ENCODE measurements at regions of chr4 and their contacts with region 1.

Region 1: GRCh38 chr4:121182296-121182695 is 18.2 kb upstream of the TNIP3 start:
- DNase-seq: no peak
- H3K4me3 Mint-ChIP-seq: peak overlapping the region; percentile 74
- H3K27ac Mint-ChIP-seq: peak overlapping the region; percentile 87
- H3K4me1 Mint-ChIP-seq: peaks cover 72% of the 10 kb centered on the region
- H3K27me3 Mint-ChIP-seq: no peaks in the 10 kb centered on the region

Region 2: GRCh38 chr4:121062521-121062920 is 119.8 kb before region 1 on chr4:
- CTCF ChIA-PET with region 1: no interaction called
- POLR2A ChIA-PET with region 1: no interaction called
- intact Hi-C with region 1: no loop called
- DNase-seq: no peak
- H3K4me3 Mint-ChIP-seq: no peak overlapping the region
- H3K27ac Mint-ChIP-seq: no peak overlapping the region
- H3K4me1 Mint-ChIP-seq: no peaks in the 10 kb centered on the region
- H3K27me3 Mint-ChIP-seq: peaks cover 13% of the 10 kb centered on the region

Region 3: GRCh38 chr4:121112530-121112929 is 69.8 kb before region 1 on chr4:
- CTCF ChIA-PET with region 1: no interaction called
- POLR2A ChIA-PET with region 1: no interaction called
- intact Hi-C with region 1: loop called (anchors 1 kb)
- DNase-seq: no peak
- H3K4me3 Mint-ChIP-seq: no peak overlapping the region
- H3K27ac Mint-ChIP-seq: no peak overlapping the region
- H3K4me1 Mint-ChIP-seq: peaks cover 12% of the 10 kb centered on the region
- H3K27me3 Mint-ChIP-seq: no peaks in the 10 kb centered on the region

Region 4: GRCh38 chr4:121156822-121157769 is 25.2 kb before region 1 on chr4:
- CTCF ChIA-PET with region 1: interaction called, 3 read pairs
- POLR2A ChIA-PET with region 1: interaction called, 3 read pairs
- intact Hi-C with region 1: loop called (anchors 1 kb)
- DNase-seq: peak; percentile 21
- H3K4me3 Mint-ChIP-seq: peak overlapping the region; percentile 68
- H3K27ac Mint-ChIP-seq: peak overlapping the region; percentile 20
- H3K4me1 Mint-ChIP-seq: peaks cover 42% of the 10 kb centered on the region
- H3K27me3 Mint-ChIP-seq: peaks cover 12% of the 10 kb centered on the region

Region 5: DNA sequence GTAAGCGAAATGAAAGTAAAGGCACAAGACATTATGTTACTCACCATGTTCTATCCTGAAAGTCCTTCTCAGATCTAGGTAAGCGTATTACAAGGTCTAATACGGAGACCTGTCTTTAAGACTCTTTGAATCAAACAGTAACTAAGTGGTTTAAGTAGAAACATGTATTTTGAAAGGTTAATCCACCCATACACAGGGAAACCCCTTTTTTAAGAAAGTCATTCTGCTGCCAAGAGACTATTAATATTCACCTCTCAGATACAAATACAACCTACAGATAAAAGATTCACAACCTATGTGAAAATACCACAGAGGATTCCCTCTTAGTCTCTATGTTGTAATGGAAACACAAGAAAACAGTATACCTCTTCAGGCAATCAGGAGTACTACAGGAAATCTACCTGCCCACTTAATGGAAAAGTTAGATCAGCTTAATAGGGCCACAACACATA is 45.1 kb after region 1 on chr4:
- CTCF ChIA-PET with region 1: no interaction called
- POLR2A ChIA-PET with region 1: no interaction called
- intact Hi-C with region 1: loop called (anchors 1 kb)
- DNase-seq: no peak
- H3K4me3 Mint-ChIP-seq: peak overlapping the region; percentile 72
- H3K27ac Mint-ChIP-seq: peak overlapping the region; percentile 86
- H3K4me1 Mint-ChIP-seq: peaks cover 59% of the 10 kb centered on the region
- H3K27me3 Mint-ChIP-seq: no peaks in the 10 kb centered on the region

Measured in activated CD4-positive, alpha-beta memory T cell treated with anti-CD3 and anti-CD28 coated beads for 36 hours (primary cell).